ENCODE measurements at regions of chr21 and their contacts with region 1.

Region 1: GRCh38 chr21:33479679-33480480 is at the start of gene TMEM50B:
- DNase-seq: peak; percentile 89 to 98 (median 94)
- ATAC-seq: peak; percentile 87 to 88
- H3K4me3 Mint-ChIP-seq: peak within 1 kb of the TSS; percentile 81 to 97 (median 94)
- H3K27ac Mint-ChIP-seq: peak within 1 kb of the TSS; percentile 65 to 98 (median 96)
- H3K4me1 Mint-ChIP-seq: peaks cover 11 to 32% (median 24%) of the 10 kb centered on the region in 4 donors
- H3K27me3 Mint-ChIP-seq: no peaks in the 10 kb centered on the region
- polyA plus RNA-seq, gene TMEM50B: 42.3 to 47.9 (median 45.4) TPM

Region 2: GRCh38 chr21:33412832-33413519 is 66.9 kb before region 1 on chr21:
- POLR2A ChIA-PET with region 1: no interaction called
- DNase-seq: no peak
- ATAC-seq: peak; percentile 56 to 58
- H3K4me3 Mint-ChIP-seq: peak overlapping the region; percentile 2 to 67 (median 51)
- H3K27ac Mint-ChIP-seq: peak overlapping the region; percentile 29 to 93 (median 84)
- H3K4me1 Mint-ChIP-seq: peaks cover 16 to 57% (median 55%) of the 10 kb centered on the region in 4 donors
- H3K27me3 Mint-ChIP-seq: no peaks in the 10 kb centered on the region

Region 3: GRCh38 chr21:33491373-33492102 is 11.7 kb after region 1 on chr21 and contains the start of gene DNAJC28:
- POLR2A ChIA-PET with region 1: interaction called, 112 read pairs
- DNase-seq: peak; percentile 93 to 100 (median 96)
- ATAC-seq: peak; percentile 94 to 96
- H3K4me3 Mint-ChIP-seq: peak within 1 kb of the TSS; percentile 85 to 98 (median 91)
- H3K27ac Mint-ChIP-seq: peak within 1 kb of the TSS; percentile 90 to 98 (median 94)
- H3K4me1 Mint-ChIP-seq: peaks cover 5 to 15% (median 10%) of the 10 kb centered on the region in 4 donors
- H3K27me3 Mint-ChIP-seq: no peaks in the 10 kb centered on the region
- polyA plus RNA-seq, gene DNAJC28: 0.89 to 1.8 (median 0.94) TPM

Region 4: DNA sequence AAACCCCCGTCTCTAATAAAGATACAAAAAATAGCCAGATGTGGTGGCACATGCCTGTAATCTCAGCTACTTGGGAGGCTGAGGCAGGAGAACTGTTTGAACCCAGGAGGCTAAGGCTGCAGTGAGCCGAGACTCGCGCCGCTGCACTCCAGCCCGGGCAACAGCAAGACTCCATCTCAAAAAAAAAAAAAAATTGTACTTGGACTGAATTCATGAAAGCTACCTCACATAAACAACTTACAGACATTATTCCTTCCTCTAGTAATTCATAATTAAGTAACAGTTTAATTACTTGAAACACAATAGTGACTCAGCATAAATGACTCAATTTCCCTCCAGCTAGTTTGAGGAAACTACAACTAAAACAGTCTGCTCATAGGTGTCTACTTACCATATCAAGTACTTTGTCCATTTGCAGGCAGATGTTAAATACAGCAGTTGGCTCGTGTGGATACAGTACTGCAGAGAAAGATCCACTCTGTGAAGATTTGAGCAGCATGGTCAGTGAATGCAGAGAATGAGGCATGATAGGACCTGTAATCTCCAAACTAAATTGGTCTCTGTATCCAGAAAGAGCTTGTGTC is 99.2 kb after region 1 on chr21:
- POLR2A ChIA-PET with region 1: no interaction called
- DNase-seq: no peak
- ATAC-seq: no peak
- H3K4me3 Mint-ChIP-seq: no peak overlapping the region
- H3K27ac Mint-ChIP-seq: peak overlapping the region in 6 of 10 donors; percentile 28 to 67 (median 49)
- H3K4me1 Mint-ChIP-seq: peaks cover 0 to 4% (median 1%) of the 10 kb centered on the region in 4 donors
- H3K27me3 Mint-ChIP-seq: no peaks in the 10 kb centered on the region

Measured in naive thymus-derived CD8-positive, alpha-beta T cell (primary cell).